ENCODE measurements at regions of chr3 and their contacts with region 1.

Region 1: DNA sequence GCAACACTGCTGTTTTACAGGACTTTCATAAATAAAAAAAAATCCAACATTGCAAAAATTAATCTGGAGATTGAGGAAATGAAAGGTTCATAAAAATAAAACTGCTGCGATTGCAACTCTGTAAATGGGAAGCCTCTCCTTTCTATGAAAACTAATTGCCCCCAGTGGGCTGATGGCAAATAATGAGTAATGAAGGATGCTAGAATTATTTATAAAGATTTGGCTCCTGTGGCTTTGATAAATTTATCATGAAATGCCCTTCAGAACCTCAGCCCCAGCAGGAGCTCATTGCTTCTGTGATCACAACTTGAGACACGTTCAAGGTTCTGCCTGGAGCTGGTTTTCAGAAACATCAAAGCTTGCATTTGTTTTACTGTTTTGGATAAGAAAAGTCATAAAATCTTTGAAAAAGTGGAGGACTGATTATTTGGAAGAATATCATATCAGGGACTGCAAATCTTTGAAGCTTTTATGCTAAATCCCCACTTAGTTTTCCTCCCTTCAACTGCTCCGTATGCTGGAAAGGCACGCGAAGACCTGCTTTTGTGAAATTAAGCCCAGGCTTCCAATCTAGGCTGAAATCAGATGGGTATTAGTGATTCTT is 24.5 kb upstream of the LYZL4 start:
- DNase-seq: no peak
- ATAC-seq: no peak
- H3K4me3 ChIP-seq: no peak overlapping the region
- H3K27ac ChIP-seq: no peak overlapping the region
- H3K4me1 ChIP-seq: no peaks in the 10 kb centered on the region
- H3K27me3 ChIP-seq: no peaks in the 10 kb centered on the region
- CTCF ChIP-seq: no peak
- POLR2A ChIP-seq: no peak
- RAD21 ChIP-seq: no peak

Region 2: DNA sequence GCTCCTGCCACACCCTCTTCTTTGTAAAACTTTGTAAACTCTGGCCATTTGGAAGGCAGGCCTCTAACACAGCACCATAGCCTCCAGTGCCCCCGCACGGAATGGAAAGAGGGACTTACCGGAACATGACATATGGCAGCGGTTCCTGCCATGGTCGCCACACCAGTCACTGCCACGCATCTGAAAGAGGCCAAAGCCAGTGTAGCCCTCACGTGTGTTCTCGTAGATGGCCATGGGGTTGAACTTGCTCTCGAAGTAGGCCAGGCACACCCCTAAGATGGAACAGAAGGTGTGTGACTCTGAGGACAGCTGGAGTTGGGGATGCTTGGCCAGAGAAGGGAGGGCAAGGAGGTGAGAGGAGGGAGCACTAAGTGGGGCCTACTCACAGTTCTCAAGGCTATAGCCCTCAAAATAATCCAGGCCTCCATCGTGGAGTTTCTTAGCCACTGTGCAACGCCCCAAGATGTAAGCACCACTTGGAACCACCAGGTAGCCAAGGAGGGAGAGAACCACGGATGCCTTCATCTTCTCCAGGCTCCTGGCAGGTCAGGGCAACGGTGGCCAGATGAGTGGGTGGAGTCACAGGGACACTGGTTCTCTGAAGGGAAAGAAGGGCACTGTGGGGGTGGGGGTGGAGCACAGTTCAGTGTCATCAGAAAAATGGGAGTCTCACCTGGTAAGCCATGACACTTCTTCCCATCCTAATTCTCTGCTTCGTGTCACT is 28.0 kb before region 1 on chr3:
- CTCF ChIA-PET with region 1: no interaction called
- POLR2A ChIA-PET with region 1: no interaction called
- RAD21 ChIA-PET with region 1: no interaction called
- intact Hi-C with region 1: loop called (anchors 1 kb)
- DNase-seq: no peak
- ATAC-seq: no peak
- H3K4me3 ChIP-seq: no peak overlapping the region
- H3K27ac ChIP-seq: no peak overlapping the region
- H3K4me1 ChIP-seq: no peaks in the 10 kb centered on the region; a peak in 1 of 4 replicates
- H3K27me3 ChIP-seq: no peaks in the 10 kb centered on the region
- CTCF ChIP-seq: no peak
- POLR2A ChIP-seq: no peak
- RAD21 ChIP-seq: no peak

Measured in HCT116 (cell line).